ENCODE measurements at regions of chr3 and their contacts with region 1.

Region 1: DNA sequence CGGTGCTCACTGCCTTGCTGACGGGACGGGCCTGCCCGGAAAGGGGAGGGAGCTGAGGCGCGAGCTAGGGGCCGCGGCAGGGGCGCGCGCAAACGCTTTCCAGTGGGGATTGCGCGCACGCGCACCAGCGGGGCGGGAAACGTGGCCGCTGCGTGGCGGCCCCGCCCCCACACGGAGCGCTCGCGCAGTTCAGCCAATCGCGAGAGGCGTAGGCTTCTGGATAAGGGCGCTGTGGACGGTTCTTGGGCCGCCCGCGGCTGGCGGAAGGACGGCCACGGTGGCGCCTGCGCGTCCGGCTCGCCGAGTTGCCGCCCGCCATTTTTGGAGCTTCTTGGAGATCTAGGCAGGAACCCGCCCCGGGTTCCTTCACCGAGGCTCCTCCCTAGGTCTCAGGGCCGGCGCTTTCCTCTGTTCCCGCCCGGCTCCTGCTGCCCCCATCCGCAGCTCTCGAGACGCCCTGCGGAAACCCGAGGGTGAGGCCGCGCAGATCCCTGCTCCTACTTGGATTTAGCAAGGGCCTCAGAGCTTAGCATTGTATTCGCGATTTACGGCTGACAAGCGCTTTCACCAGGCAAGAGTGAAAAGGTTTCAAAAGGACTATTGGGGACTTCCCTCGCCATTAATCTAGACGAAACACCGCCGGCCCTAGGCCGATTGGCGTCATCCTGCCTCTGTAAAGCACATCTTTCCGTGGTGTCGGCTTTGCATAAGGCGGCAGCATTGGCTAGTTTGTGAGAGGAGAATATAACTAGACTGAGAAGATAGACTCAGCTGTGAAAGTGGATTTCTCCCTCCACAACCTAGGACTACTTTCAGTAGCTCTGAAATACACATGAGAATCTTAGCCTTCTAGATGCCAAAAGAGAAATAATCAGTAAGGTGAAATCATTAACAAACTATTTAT is 496 bp upstream of the STAG1 start:
- DNase-seq: peak; percentile 100
- ATAC-seq: peak; percentile 83
- H3K4me3 ChIP-seq: peak overlapping the region; percentile 88 to 98 (median 93)
- H3K4me3 Mint-ChIP-seq: peak overlapping the region; percentile 90
- H3K27ac ChIP-seq: peak overlapping the region; percentile 99 to 100
- H3K27ac Mint-ChIP-seq: peak overlapping the region; percentile 97
- H3K4me1 ChIP-seq: peaks cover 25 to 30% of the 10 kb centered on the region in 2 donors
- H3K4me1 Mint-ChIP-seq: peaks cover 42% of the 10 kb centered on the region
- H3K27me3 ChIP-seq: no peaks in the 10 kb centered on the region
- H3K27me3 Mint-ChIP-seq: no peaks in the 10 kb centered on the region
- CTCF ChIP-seq: peak; percentile 23

Region 2: GRCh38 chr3:136250226-136250902 is 502.3 kb before region 1 on chr3 and contains the start of gene PCCB:
- CTCF ChIA-PET with region 1: interaction called, 7 read pairs
- POLR2A ChIA-PET with region 1: interaction called, 5 read pairs
- intact Hi-C with region 1: loop called (anchors 1 kb)
- DNase-seq: peak; percentile 98
- ATAC-seq: peak; percentile 96
- H3K4me3 ChIP-seq: peak within 1 kb of the TSS; percentile 59 to 76 (median 73)
- H3K4me3 Mint-ChIP-seq: peak within 1 kb of the TSS; percentile 92
- H3K27ac ChIP-seq: peak within 1 kb of the TSS; percentile 72 to 83
- H3K27ac Mint-ChIP-seq: peak within 1 kb of the TSS; percentile 92
- H3K4me1 ChIP-seq: peaks cover 10 to 17% of the 10 kb centered on the region in 2 donors
- H3K4me1 Mint-ChIP-seq: peaks cover 20% of the 10 kb centered on the region
- H3K27me3 ChIP-seq: no peaks in the 10 kb centered on the region
- H3K27me3 Mint-ChIP-seq: no peaks in the 10 kb centered on the region
- CTCF ChIP-seq: peak; percentile 82
- total RNA-seq, gene PCCB: 12.5 and 15.5 TPM in 2 replicates

Region 3: DNA sequence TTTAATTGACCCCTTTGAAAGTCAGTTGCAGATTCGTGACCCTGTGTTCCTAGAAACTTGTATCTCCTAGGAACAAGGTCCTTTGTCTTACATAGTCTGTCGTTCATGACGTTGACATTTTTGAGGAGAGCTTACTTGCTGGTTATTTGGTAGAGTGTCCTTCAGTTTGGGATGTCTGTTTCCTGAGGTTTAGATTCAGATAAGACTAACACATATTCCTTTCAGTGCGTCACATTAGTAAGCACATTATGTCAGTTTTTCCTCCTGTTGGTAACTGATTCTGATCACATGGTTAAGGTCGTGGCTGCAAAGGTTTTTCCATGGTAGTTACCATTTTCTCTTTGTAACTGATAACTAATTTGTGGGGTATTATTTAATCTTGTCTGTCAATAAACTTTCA is 421.8 kb before region 1 on chr3:
- CTCF ChIA-PET with region 1: no interaction called
- POLR2A ChIA-PET with region 1: no interaction called
- intact Hi-C with region 1: no loop called
- DNase-seq: no peak
- ATAC-seq: no peak
- H3K4me3 ChIP-seq: no peak overlapping the region
- H3K4me3 Mint-ChIP-seq: no peak overlapping the region
- H3K27ac ChIP-seq: no peak overlapping the region
- H3K27ac Mint-ChIP-seq: no peak overlapping the region
- H3K4me1 ChIP-seq: no peaks in the 10 kb centered on the region
- H3K4me1 Mint-ChIP-seq: no peaks in the 10 kb centered on the region
- H3K27me3 ChIP-seq: no peaks in the 10 kb centered on the region
- H3K27me3 Mint-ChIP-seq: no peaks in the 10 kb centered on the region
- CTCF ChIP-seq: no peak

Region 4: GRCh38 chr3:136545664-136546268 is 206.9 kb before region 1 on chr3:
- CTCF ChIA-PET with region 1: no interaction called
- POLR2A ChIA-PET with region 1: no interaction called
- intact Hi-C with region 1: loop called (anchors 2 kb)
- DNase-seq: no peak
- ATAC-seq: no peak
- H3K4me3 ChIP-seq: no peak overlapping the region
- H3K4me3 Mint-ChIP-seq: no peak overlapping the region
- H3K27ac ChIP-seq: no peak overlapping the region
- H3K27ac Mint-ChIP-seq: no peak overlapping the region
- H3K4me1 ChIP-seq: peaks cover 3 to 8% of the 10 kb centered on the region in 2 donors
- H3K4me1 Mint-ChIP-seq: peaks cover 17% of the 10 kb centered on the region
- H3K27me3 ChIP-seq: no peaks in the 10 kb centered on the region
- H3K27me3 Mint-ChIP-seq: no peaks in the 10 kb centered on the region
- CTCF ChIP-seq: no peak

Region 5: GRCh38 chr3:137013955-137014688 is 261.4 kb after region 1 on chr3:
- CTCF ChIA-PET with region 1: interaction called, 66 read pairs
- POLR2A ChIA-PET with region 1: interaction called, 5 read pairs
- intact Hi-C with region 1: loop called (anchors 1 kb)
- DNase-seq: peak; percentile 85
- ATAC-seq: peak; percentile 90
- H3K4me3 ChIP-seq: peak overlapping the region in 4 of 5 experiments; percentile 7 to 55 (median 38)
- H3K4me3 Mint-ChIP-seq: peak overlapping the region; percentile 71
- H3K27ac ChIP-seq: no peak overlapping the region
- H3K27ac Mint-ChIP-seq: no peak overlapping the region
- H3K4me1 ChIP-seq: peaks cover 5 to 9% of the 10 kb centered on the region in 2 donors
- H3K4me1 Mint-ChIP-seq: peaks cover 7% of the 10 kb centered on the region
- H3K27me3 ChIP-seq: no peaks in the 10 kb centered on the region
- H3K27me3 Mint-ChIP-seq: no peaks in the 10 kb centered on the region
- CTCF ChIP-seq: peak; percentile 95

Measured in B cell (primary cell).